ENCODE measurements at regions of chr11 and their contacts with region 1.

Region 1: GRCh38 chr11:103368145-103368544 is 258.9 kb downstream of the DYNC2H1 start:
- DNase-seq: no peak
- H3K4me3 ChIP-seq: no peak overlapping the region
- H3K27ac ChIP-seq: no peak overlapping the region
- H3K4me1 ChIP-seq: no peaks in the 10 kb centered on the region
- H3K27me3 ChIP-seq: no peaks in the 10 kb centered on the region
- CTCF ChIP-seq: no peak

Region 2: DNA sequence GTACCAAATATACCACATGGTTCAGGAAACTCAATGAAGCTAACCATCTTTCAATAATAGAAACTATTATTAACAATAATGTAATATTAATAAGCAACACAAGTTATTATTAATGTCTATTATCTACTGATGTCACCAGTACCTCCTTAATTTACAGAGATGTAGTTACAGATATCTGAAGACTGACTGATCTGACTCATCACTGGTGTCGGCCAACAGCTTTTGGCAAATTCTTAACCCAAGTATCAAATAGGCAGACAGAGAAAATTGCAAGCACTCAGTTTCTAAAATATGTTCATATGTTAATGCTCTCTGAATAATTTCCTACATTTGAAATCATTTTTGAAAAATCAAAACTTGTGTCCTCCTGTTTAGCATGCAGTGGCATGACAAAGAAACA is 567.9 kb after region 1 on chr11:
- CTCF ChIA-PET with region 1: no interaction called
- POLR2A ChIA-PET with region 1: no interaction called
- intact Hi-C with region 1: no loop called
- DNase-seq: no peak
- H3K4me3 ChIP-seq: no peak overlapping the region
- H3K27ac ChIP-seq: no peak overlapping the region
- H3K4me1 ChIP-seq: no peaks in the 10 kb centered on the region
- H3K27me3 ChIP-seq: no peaks in the 10 kb centered on the region
- CTCF ChIP-seq: no peak

Region 3: GRCh38 chr11:104061853-104062496 is 693.8 kb after region 1 on chr11:
- CTCF ChIA-PET with region 1: no interaction called
- POLR2A ChIA-PET with region 1: interaction called, 33 read pairs
- intact Hi-C with region 1: no loop called
- DNase-seq: no peak
- H3K4me3 ChIP-seq: no peak overlapping the region
- H3K27ac ChIP-seq: no peak overlapping the region
- H3K4me1 ChIP-seq: no peaks in the 10 kb centered on the region
- H3K27me3 ChIP-seq: no peaks in the 10 kb centered on the region
- CTCF ChIP-seq: no peak

Measured in A673 (cell line).